CD4-positive, alpha-beta memory T cell (primary cell): ENCODE measurements at regions of chr5 and their contacts with region 1.

Region 1: DNA sequence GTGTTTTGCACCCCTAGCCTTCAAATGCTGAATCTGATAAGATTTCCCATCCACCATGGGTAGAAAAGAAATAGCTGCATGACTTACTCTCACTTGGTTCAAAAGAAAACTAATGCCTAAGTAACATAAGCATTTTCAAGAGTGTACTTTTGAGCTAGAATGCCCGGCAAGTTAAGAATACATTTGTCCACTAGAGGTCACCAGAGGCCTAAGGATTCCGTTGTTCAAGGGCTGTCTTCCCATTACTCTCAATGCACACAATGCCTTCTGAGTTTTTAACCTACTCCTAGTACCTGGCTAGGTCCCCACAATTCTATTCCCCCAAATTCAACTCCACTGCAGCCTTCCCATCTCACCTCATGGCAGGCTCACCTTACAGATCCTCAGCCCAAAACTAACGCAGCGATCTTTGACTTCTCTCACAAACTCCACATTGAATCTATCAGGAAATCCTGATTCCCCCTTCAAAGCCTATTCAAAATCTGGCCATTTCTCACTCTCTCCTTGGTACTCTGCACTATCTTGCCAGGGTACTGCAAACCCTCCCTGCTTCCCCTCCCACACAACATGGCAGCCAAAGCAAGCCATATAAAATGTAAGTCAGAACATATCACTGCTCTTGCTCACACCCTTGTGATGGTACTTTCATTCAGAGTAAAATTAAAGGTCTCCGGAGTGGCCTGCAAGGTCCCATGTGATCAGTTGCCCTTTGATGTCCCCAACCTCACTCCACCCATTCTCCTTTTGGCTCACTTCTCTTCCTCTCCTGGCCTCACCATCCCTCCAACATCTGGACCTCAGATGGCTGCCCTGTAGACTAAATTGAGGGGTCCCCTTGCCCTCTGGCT is 13.4 kb downstream of the OXCT1 start:
- DNase-seq: peak; percentile 66 to 77 (median 70)
- H3K4me3 ChIP-seq: no peak overlapping the region
- H3K4me3 Mint-ChIP-seq: no peak overlapping the region
- H3K27ac ChIP-seq: no peak overlapping the region
- H3K27ac Mint-ChIP-seq: no peak overlapping the region
- H3K4me1 ChIP-seq: no peaks in the 10 kb centered on the region
- H3K4me1 Mint-ChIP-seq: peaks cover 7 to 10% (median 9%) of the 10 kb centered on the region in 4 donors
- H3K27me3 ChIP-seq: no peaks in the 10 kb centered on the region
- H3K27me3 Mint-ChIP-seq: no peaks in the 10 kb centered on the region

Region 2: GRCh38 chr5:41869739-41870626 is 13.1 kb after region 1 on chr5 and contains the start of gene OXCT1:
- CTCF ChIA-PET with region 1: interaction called, 25 read pairs
- POLR2A ChIA-PET with region 1: interaction called, 8 read pairs
- intact Hi-C with region 1: no loop called
- DNase-seq: peak; percentile 91 to 96 (median 96)
- H3K4me3 ChIP-seq: peak within 1 kb of the TSS; percentile 74 to 81
- H3K4me3 Mint-ChIP-seq: peak within 1 kb of the TSS; percentile 85 to 96 (median 91)
- H3K27ac ChIP-seq: peak within 1 kb of the TSS; percentile 93
- H3K27ac Mint-ChIP-seq: peak within 1 kb of the TSS; percentile 94 to 99 (median 97)
- H3K4me1 ChIP-seq: peaks cover 55% of the 10 kb centered on the region
- H3K4me1 Mint-ChIP-seq: peaks cover 37 to 70% (median 46%) of the 10 kb centered on the region in 4 donors
- H3K27me3 ChIP-seq: no peaks in the 10 kb centered on the region
- H3K27me3 Mint-ChIP-seq: no peaks in the 10 kb centered on the region
- total RNA-seq, gene OXCT1: 34.1 to 37.5 TPM

Region 3: GRCh38 chr5:41893074-41893851 is 36.4 kb after region 1 on chr5:
- CTCF ChIA-PET with region 1: no interaction called
- POLR2A ChIA-PET with region 1: no interaction called
- intact Hi-C with region 1: no loop called
- DNase-seq: no peak
- H3K4me3 ChIP-seq: no peak overlapping the region
- H3K4me3 Mint-ChIP-seq: peak overlapping the region in 5 of 8 donors; percentile 17 to 61 (median 43)
- H3K27ac ChIP-seq: no peak overlapping the region
- H3K27ac Mint-ChIP-seq: peak overlapping the region in 1 of 7 donors; percentile 53
- H3K4me1 ChIP-seq: no peaks in the 10 kb centered on the region
- H3K4me1 Mint-ChIP-seq: peaks cover 0 to 10% (median 6%) of the 10 kb centered on the region in 4 donors
- H3K27me3 ChIP-seq: no peaks in the 10 kb centered on the region
- H3K27me3 Mint-ChIP-seq: peaks cover 1 to 14% of the 10 kb centered on the region in 2 donors

Region 4: DNA sequence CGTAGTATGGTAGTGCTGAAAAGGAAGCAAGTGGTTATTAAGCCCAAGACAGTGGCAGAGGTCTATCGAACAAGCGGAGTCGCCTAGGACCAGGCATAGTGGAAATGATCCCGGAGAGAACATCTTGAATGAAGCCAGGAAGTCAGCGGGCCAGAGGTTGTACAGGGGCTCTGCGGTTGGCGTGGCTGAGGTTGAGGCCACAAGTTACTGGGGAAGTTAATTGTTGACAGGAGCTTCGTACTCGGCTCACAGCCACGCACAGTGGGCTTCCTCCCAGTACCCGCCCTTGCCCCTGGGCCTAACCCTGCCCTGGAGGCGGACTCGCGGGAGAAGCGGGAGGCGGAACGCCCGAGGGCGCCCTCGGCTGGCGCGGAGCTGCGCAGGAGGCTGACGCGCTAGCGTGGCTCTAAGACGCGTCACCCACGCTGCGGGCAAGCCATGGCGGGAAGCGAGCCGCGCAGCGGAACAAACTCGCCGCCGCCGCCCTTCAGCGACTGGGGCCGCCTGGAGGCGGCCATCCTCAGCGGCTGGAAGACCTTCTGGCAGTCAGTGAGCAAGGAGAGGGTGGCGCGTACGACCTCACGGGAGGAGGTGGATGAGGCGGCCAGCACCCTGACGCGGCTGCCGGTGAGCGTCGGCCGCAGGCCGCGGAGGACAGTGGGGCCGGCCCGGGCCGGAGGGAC is 68.1 kb after region 1 on chr5 and contains the start of gene FBXO4:
- CTCF ChIA-PET with region 1: interaction called, 36 read pairs
- POLR2A ChIA-PET with region 1: interaction called, 17 read pairs
- intact Hi-C with region 1: loop called (anchors 1 kb)
- DNase-seq: peak; percentile 89 to 93 (median 91)
- H3K4me3 ChIP-seq: peak within 1 kb of the TSS; percentile 83 to 95
- H3K4me3 Mint-ChIP-seq: peak within 1 kb of the TSS; percentile 81 to 91 (median 89)
- H3K27ac ChIP-seq: peak within 1 kb of the TSS; percentile 93
- H3K27ac Mint-ChIP-seq: peak within 1 kb of the TSS; percentile 81 to 100 (median 98)
- H3K4me1 ChIP-seq: peaks cover 25% of the 10 kb centered on the region
- H3K4me1 Mint-ChIP-seq: peaks cover 10 to 33% (median 22%) of the 10 kb centered on the region in 4 donors
- H3K27me3 ChIP-seq: no peaks in the 10 kb centered on the region
- H3K27me3 Mint-ChIP-seq: no peaks in the 10 kb centered on the region
- total RNA-seq, gene FBXO4: 15.1 to 18.2 TPM

Region 5: GRCh38 chr5:42057254-42057690 is 200.4 kb after region 1 on chr5:
- CTCF ChIA-PET with region 1: interaction called, 196 read pairs
- POLR2A ChIA-PET with region 1: interaction called, 9 read pairs
- intact Hi-C with region 1: loop called (anchors 1 kb)
- DNase-seq: peak; percentile 51 to 57 (median 54)
- H3K4me3 ChIP-seq: no peak overlapping the region
- H3K4me3 Mint-ChIP-seq: no peak overlapping the region
- H3K27ac ChIP-seq: no peak overlapping the region
- H3K27ac Mint-ChIP-seq: no peak overlapping the region
- H3K4me1 ChIP-seq: no peaks in the 10 kb centered on the region
- H3K4me1 Mint-ChIP-seq: no peaks in the 10 kb centered on the region
- H3K27me3 ChIP-seq: no peaks in the 10 kb centered on the region
- H3K27me3 Mint-ChIP-seq: peaks cover 4 to 9% of the 10 kb centered on the region in 2 donors

Region 6: DNA sequence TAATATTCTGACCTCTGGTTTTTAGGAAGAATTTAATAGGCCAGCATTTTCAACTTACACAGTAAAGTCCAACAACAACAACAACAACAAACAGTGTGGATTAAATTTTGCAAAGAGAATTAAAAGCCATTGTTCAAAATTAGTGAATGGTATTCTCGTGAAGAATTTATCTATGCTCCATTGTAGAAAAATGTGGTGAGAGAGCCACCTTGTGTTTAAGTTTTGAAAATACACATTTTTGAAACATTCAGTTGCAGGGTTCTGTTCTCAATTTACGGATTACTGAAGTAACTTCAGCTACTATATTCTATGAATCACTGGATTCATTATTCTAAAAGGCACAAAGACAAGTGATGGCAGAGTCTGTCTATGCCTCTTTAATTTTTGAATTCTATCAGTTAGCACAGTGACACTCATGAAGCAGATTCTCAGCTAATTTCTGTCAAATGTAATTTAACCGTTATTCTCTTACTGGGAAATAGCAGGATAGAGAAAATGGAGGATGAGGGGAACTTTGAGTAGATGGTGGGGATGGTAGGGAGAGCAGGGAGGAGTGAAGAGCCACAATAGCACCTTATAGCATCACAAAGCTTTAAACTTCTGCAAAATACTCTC is 910.7 kb after region 1 on chr5:
- CTCF ChIA-PET with region 1: interaction called, 7 read pairs
- POLR2A ChIA-PET with region 1: no interaction called
- intact Hi-C with region 1: loop called (anchors 1 kb)
- DNase-seq: peak in 4 of 5 donors; percentile 29 to 40 (median 33)
- H3K4me3 ChIP-seq: no peak overlapping the region
- H3K4me3 Mint-ChIP-seq: no peak overlapping the region
- H3K27ac ChIP-seq: no peak overlapping the region
- H3K27ac Mint-ChIP-seq: no peak overlapping the region
- H3K4me1 ChIP-seq: no peaks in the 10 kb centered on the region
- H3K4me1 Mint-ChIP-seq: no peaks in the 10 kb centered on the region
- H3K27me3 ChIP-seq: no peaks in the 10 kb centered on the region
- H3K27me3 Mint-ChIP-seq: peaks cover 5 to 6% of the 10 kb centered on the region in 2 donors

Region 7: GRCh38 chr5:43396762-43397304 is 1540.0 kb after region 1 on chr5:
- CTCF ChIA-PET with region 1: no interaction called
- POLR2A ChIA-PET with region 1: no interaction called
- intact Hi-C with region 1: loop called (anchors 5 kb)
- DNase-seq: peak; percentile 61 to 66 (median 64)
- H3K4me3 ChIP-seq: peak overlapping the region; percentile 94 to 95
- H3K4me3 Mint-ChIP-seq: peak overlapping the region; percentile 92 to 100 (median 98)
- H3K27ac ChIP-seq: peak overlapping the region; percentile 58
- H3K27ac Mint-ChIP-seq: peak overlapping the region; percentile 84 to 99 (median 96)
- H3K4me1 ChIP-seq: peaks cover 15% of the 10 kb centered on the region
- H3K4me1 Mint-ChIP-seq: peaks cover 9 to 44% (median 21%) of the 10 kb centered on the region in 4 donors
- H3K27me3 ChIP-seq: no peaks in the 10 kb centered on the region
- H3K27me3 Mint-ChIP-seq: no peaks in the 10 kb centered on the region